ENCODE measurements at regions of chr3 and their contacts with region 1.

Region 1: DNA sequence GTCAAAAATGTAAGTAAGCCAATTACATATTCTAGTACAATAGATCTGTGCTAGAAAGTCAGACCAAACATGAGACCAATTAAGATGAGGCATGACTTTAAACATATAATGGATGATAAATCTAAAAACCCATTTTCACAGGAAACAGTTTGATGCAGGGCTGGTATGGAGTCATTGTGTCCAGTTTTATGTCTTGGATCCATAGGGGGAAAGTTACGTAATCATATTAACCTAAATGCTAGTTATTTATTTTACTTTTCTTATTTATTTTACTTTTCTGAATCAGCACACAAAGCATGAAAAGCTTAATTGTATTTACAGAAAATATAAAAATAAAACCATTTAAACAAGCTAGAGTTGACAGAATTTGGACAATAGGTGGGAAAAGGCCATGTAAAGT is 26.3 kb upstream of the TMCC1 start:
- DNase-seq: no peak
- ATAC-seq: no peak
- H3K4me3 ChIP-seq: no peak overlapping the region
- H3K27ac ChIP-seq: no peak overlapping the region
- H3K4me1 ChIP-seq: no peaks in the 10 kb centered on the region; a peak in 1 of 5 replicates
- H3K27me3 ChIP-seq: peaks cover 0 to 4% of the 10 kb centered on the region in 2 experiments; a peak in 1 of 5 replicates
- CTCF ChIP-seq: no peak
- EP300 ChIP-seq: no peak
- POLR2A ChIP-seq: no peak
- RAD21 ChIP-seq: no peak

Region 2: DNA sequence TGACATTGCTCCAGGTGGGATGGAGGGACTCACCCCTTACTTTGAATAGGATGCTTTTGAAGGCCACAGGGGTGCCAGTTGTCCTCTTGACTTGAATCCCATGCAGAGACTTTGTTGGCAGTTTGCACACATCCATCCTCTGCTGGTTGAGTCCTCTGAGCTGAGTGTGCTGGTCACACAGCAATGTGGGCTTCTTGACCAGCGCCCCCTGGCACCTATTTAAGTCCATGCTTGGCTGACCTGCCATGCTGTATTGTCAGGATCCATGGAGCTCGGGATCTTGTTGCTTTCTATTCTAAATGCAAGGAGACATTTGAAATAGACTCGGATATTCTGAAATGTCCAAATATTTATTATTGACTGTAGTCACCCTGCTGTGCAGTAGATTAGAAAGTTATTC is 1174.1 kb before region 1 on chr3:
- CTCF ChIA-PET with region 1: no interaction called
- POLR2A ChIA-PET with region 1: no interaction called
- in situ Hi-C with region 1: no loop called
- intact Hi-C with region 1: no loop called
- DNase-seq: no peak
- ATAC-seq: peak; percentile 46; the same call in 2 of the 3 replicates
- H3K4me3 ChIP-seq: no peak overlapping the region
- H3K27ac ChIP-seq: no peak overlapping the region
- H3K4me1 ChIP-seq: peaks cover 2 to 4% of the 10 kb centered on the region in 2 experiments; a peak in 3 of 5 replicates
- H3K27me3 ChIP-seq: no peaks in the 10 kb centered on the region
- CTCF ChIP-seq: no peak
- EP300 ChIP-seq: no peak
- POLR2A ChIP-seq: no peak
- RAD21 ChIP-seq: no peak

Region 3: GRCh38 chr3:129650256-129650872 is 269.4 kb before region 1 on chr3:
- CTCF ChIA-PET with region 1: no interaction called
- POLR2A ChIA-PET with region 1: no interaction called
- in situ Hi-C with region 1: loop called (anchors 5 kb)
- intact Hi-C with region 1: no loop called
- DNase-seq: peak; percentile 28 to 74 (median 59)
- ATAC-seq: peak; percentile 80
- H3K4me3 ChIP-seq: no peak overlapping the region
- H3K27ac ChIP-seq: no peak overlapping the region
- H3K4me1 ChIP-seq: no peaks in the 10 kb centered on the region
- H3K27me3 ChIP-seq: no peaks in the 10 kb centered on the region
- CTCF ChIP-seq: peak; percentile 68 to 86 (median 81)
- EP300 ChIP-seq: no peak
- POLR2A ChIP-seq: no peak
- RAD21 ChIP-seq: peak; percentile 77 to 87